ENCODE measurements at regions of chr12 and their contacts with region 1.

Region 1: DNA sequence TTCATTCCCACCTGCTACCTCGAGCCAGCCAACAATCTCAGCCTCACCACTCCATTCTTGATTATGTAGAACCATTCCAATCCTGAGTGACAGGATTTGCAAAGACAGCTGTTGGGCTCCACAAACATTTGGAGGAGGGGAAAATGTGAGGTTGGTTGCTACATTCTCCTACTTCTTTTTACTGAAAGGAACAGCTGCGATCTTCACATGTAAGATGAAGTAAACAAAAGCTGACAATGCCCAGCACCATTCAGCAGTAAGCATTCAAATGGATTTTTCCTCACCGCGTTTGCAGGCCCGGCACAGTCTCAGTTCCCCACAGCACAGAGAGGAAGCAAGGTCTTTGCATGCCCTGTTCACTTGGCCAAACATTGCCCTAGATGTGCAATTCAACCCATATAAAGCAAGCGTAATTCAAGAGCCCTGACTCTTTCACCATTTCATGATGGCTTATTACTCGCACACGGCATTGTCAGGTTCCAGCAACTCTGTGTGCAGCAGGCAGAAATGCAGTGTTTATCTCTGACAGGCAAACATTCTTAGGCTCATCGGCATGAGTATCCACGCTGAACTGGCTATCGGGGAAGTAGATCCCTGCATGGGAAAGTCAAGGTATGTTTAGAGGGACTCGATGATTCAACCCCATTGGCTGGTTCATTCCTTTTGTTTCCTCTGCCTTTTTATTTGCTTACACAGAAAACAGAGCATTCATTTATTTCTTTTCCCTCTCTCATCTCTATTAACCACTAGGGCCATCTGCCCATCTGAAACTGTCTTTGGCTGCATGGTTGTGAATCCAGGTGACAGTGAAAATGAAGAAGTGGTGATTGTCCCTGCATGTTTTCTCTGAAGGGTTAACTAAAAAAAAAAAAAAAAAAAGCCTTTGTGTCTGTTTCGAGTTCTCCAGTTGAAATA is 236.1 kb upstream of the PLEKHG7 start:
- DNase-seq: no peak

Region 2: GRCh38 chr12:92162079-92162478 is 304.6 kb before region 1 on chr12:
- intact Hi-C with region 1: loop called in 1 of 2 experiments (anchors 10 kb)
- DNase-seq: no peak

Region 3: DNA sequence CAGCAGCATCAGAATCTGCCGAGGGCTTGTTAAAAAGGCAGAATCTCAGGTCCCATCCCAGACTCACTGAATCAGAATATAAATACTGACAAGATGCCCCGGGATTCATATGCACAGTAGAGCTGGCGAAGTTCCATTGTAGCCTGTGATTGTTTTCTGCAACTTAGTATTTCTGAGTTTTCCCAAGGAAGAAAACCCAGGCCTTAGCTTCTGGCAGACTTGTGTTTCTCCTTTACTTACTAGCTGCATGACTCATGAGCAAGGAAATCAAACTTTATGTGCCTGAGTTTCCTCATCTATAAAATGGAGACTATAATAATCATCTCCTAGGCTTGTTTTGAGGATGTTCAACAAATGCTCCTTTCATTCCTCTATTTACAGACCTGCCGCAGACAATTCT is 42.3 kb before region 1 on chr12:
- intact Hi-C with region 1: no loop called
- DNase-seq: no peak